Activated naive CD4-positive, alpha-beta T cell treated with anti-CD3 and anti-CD28 coated beads, Interleukin-2, amount 10 ng/mL, durations not matched to agents 7 days and 5 days (primary cell): ENCODE measurements at regions of chr6 and their contacts with region 1.

Region 1: GRCh38 chr6:2999618-3000557 is at the start of gene NQO2:
- DNase-seq: peak; percentile 92
- H3K4me3 Mint-ChIP-seq: peak within 1 kb of the TSS; percentile 82
- H3K27ac Mint-ChIP-seq: peak within 1 kb of the TSS; percentile 74
- H3K4me1 Mint-ChIP-seq: peaks cover 36% of the 10 kb centered on the region
- H3K27me3 Mint-ChIP-seq: peaks cover 3% of the 10 kb centered on the region

Region 2: DNA sequence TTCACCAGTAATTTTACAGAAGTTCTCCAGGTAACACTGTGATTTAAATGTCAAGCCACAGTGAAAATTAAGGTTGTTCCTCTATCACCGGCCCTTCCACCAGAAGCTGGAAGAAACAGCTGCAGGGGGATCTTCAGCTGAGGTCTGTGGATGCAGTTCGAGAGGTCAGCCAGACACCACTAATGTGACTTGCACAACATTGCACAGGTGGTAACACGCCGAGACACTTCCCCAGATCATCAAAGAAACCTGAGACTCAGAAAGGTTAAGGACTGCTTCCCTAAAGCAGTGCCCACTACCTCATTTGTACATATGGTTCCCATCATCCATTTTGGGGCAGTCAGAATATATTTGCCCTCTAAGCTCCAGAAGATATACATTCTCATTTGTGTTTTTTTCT is 88.7 kb before region 1 on chr6:
- CTCF ChIA-PET with region 1: no interaction called
- DNase-seq: no peak
- H3K4me3 Mint-ChIP-seq: no peak overlapping the region
- H3K27ac Mint-ChIP-seq: no peak overlapping the region
- H3K4me1 Mint-ChIP-seq: peaks cover 29% of the 10 kb centered on the region
- H3K27me3 Mint-ChIP-seq: peaks cover 1% of the 10 kb centered on the region

Region 3: GRCh38 chr6:2976571-2977085 is 23.3 kb before region 1 on chr6:
- CTCF ChIA-PET with region 1: no interaction called
- DNase-seq: no peak
- H3K4me3 Mint-ChIP-seq: no peak overlapping the region
- H3K27ac Mint-ChIP-seq: no peak overlapping the region
- H3K4me1 Mint-ChIP-seq: peaks cover 14% of the 10 kb centered on the region
- H3K27me3 Mint-ChIP-seq: peaks cover 62% of the 10 kb centered on the region

Region 4: DNA sequence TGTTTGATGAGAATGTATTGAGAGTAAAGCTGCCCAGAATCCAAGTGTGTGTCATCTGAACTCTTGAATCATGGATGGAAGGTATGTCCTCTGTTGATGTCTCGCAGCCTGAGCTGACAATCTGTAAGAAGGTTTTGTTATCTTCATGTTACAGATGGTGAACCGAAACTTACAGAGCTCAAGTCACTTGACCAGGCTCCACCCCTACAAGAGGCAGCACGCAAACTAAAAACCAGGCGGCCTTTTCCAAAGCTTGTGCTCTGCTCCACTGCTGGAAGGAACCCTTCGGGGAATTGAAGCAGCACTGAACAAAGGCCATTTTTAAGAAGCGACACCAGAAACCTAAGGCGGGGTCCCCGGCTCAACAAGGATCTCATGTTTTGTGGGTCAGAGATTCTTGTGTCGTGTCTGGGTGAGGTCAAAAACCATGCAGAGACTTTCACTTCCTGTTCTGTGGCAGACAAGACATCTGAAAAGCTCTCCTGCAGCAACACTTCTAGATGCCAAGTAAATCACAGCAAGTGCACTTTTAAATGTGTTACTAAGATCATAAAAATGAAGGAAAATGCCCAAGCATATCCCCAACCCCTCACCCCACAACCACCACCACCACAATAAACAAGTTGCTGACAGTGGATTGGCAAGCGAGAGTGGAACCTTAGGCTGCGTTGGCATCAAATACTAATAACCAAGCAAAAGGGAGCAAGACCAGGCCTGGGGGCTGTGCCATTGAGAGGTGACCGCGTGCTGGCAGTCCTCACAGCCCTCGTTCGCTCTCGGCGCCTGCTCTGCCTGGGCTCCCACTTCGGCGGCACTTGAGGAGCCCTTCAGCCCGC is 27.1 kb after region 1 on chr6:
- CTCF ChIA-PET with region 1: interaction called, 20 read pairs
- DNase-seq: peak; percentile 66
- H3K4me3 Mint-ChIP-seq: peak overlapping the region; percentile 54
- H3K27ac Mint-ChIP-seq: peak overlapping the region; percentile 96
- H3K4me1 Mint-ChIP-seq: peaks cover 68% of the 10 kb centered on the region
- H3K27me3 Mint-ChIP-seq: peaks cover 9% of the 10 kb centered on the region

Region 5: DNA sequence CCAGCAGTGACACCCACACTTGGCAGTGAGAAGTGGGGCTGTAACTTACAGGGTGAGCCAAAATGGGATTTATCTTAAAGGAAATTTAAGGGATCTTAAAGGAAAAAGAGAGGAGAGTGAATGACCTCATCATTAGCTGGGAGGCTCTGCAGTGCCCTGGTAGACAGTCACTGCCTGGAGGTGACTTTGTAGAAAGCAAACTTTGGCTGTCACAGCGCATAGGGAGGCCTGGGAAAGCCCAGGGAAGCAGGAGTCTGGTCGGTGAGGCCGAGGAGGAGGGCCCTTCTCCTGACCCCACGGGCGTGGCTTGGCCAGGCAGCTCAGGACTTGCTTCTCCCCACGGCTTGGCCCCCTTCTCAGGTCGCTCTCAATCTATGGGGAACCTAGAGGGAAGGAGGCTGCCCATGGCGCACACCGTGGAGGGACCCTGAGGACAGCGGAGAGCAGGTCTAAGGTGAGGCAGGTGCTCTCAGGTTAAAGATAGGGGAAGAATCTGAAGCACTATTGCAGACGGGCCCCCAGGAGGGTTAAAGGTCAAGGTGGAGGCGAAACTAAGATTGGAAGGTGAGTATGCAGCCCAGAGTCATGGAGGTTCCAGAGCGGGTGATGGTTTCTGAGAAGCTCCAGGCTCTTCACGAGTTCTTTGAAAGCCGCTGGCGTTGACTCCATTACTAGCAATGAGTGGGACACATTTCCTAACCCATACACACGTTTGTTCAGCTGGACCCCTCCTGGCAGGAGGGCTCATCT is 52.8 kb after region 1 on chr6:
- CTCF ChIA-PET with region 1: interaction called, 22 read pairs
- DNase-seq: no peak
- H3K4me3 Mint-ChIP-seq: peak overlapping the region; percentile 66
- H3K27ac Mint-ChIP-seq: peak overlapping the region; percentile 42
- H3K4me1 Mint-ChIP-seq: peaks cover 34% of the 10 kb centered on the region
- H3K27me3 Mint-ChIP-seq: peaks cover 54% of the 10 kb centered on the region

Region 6: GRCh38 chr6:3058957-3059356 is 59.1 kb after region 1 on chr6:
- CTCF ChIA-PET with region 1: interaction called, 22 read pairs
- DNase-seq: no peak
- H3K4me3 Mint-ChIP-seq: no peak overlapping the region
- H3K27ac Mint-ChIP-seq: peak overlapping the region; percentile 8
- H3K4me1 Mint-ChIP-seq: peaks cover 36% of the 10 kb centered on the region
- H3K27me3 Mint-ChIP-seq: peaks cover 14% of the 10 kb centered on the region